ENCODE measurements at regions of chr14 and their contacts with region 1.

Region 1: DNA sequence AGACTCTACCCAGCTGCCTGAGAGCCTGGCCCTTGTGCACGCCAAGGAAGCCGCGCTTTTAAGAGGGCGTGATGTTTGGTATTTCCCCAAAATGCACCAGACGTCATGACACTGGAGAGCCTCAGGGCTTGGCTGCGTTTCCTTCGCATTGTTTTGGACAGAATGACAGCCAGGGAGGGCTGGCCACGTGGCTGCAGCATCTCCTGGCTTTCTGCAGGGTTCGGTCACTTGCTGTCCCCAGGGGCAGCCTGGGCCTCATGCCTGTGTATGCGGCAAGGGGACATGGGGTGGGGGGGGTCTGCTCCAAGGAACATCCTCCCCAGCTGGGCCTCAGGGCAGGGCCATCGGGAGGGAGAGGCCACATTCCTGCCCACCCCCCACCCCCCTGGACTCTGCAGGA is 16.2 kb upstream of the NUDT14 start:
- DNase-seq: no peak
- H3K4me3 ChIP-seq: peak overlapping the region in 1 of 4 experiments; percentile 58; a peak in 2 of 8 replicates
- H3K27ac ChIP-seq: no peak overlapping the region
- H3K4me1 ChIP-seq: peaks cover 0 to 17% (median 13%) of the 10 kb centered on the region in 4 experiments; a peak in 5 of 7 replicates
- H3K27me3 ChIP-seq: peaks cover 0 to 37% (median 19%) of the 10 kb centered on the region in 4 experiments; a peak in 5 of 7 replicates
- CTCF ChIP-seq: no peak
- EP300 ChIP-seq: no peak
- POLR2A ChIP-seq: no peak
- RAD21 ChIP-seq: no peak

Region 2: GRCh38 chr14:105065280-105066228 is 131.7 kb before region 1 on chr14 and contains the start of gene GPR132:
- CTCF ChIA-PET with region 1: no interaction called
- POLR2A ChIA-PET with region 1: no interaction called
- DNase-seq: no peak
- H3K4me3 ChIP-seq: no peak within 1 kb of the TSS
- H3K27ac ChIP-seq: no peak within 1 kb of the TSS
- H3K4me1 ChIP-seq: no peaks in the 10 kb centered on the region; a peak in 2 of 7 replicates
- H3K27me3 ChIP-seq: no peaks in the 10 kb centered on the region; a peak in 1 of 7 replicates
- CTCF ChIP-seq: no peak
- EP300 ChIP-seq: no peak
- POLR2A ChIP-seq: no peak
- RAD21 ChIP-seq: no peak
- total RNA-seq, gene GPR132: not detected in 2 replicates

Region 3: GRCh38 chr14:105126981-105127329 is 70.3 kb before region 1 on chr14:
- CTCF ChIA-PET with region 1: no interaction called
- POLR2A ChIA-PET with region 1: no interaction called
- DNase-seq: no peak
- H3K4me3 ChIP-seq: no peak overlapping the region
- H3K27ac ChIP-seq: no peak overlapping the region
- H3K4me1 ChIP-seq: no peaks in the 10 kb centered on the region
- H3K27me3 ChIP-seq: peaks cover 0 to under 1% (median 0%) of the 10 kb centered on the region in 4 experiments; a peak in 2 of 7 replicates
- CTCF ChIP-seq: no peak
- EP300 ChIP-seq: no peak
- POLR2A ChIP-seq: no peak
- RAD21 ChIP-seq: no peak

Region 4: GRCh38 chr14:105173901-105174894 is 23.1 kb before region 1 on chr14:
- CTCF ChIA-PET with region 1: interaction called, 36 read pairs
- POLR2A ChIA-PET with region 1: interaction called, 3 read pairs
- DNase-seq: no peak
- H3K4me3 ChIP-seq: no peak overlapping the region
- H3K27ac ChIP-seq: no peak overlapping the region
- H3K4me1 ChIP-seq: peaks cover 0 to 3% (median 2%) of the 10 kb centered on the region in 4 experiments; a peak in 4 of 7 replicates
- H3K27me3 ChIP-seq: peaks cover 0 to 8% (median 4%) of the 10 kb centered on the region in 4 experiments; a peak in 3 of 7 replicates
- CTCF ChIP-seq: no peak
- EP300 ChIP-seq: no peak
- POLR2A ChIP-seq: no peak
- RAD21 ChIP-seq: no peak

Region 5: GRCh38 chr14:105180592-105181548 is 16.4 kb before region 1 on chr14 and contains the start of gene NUDT14:
- CTCF ChIA-PET with region 1: interaction called, 12 read pairs
- POLR2A ChIA-PET with region 1: interaction called, 3 read pairs
- DNase-seq: peak in 1 of 2 experiments; percentile 92
- H3K4me3 ChIP-seq: peak within 1 kb of the TSS; percentile 33 to 72 (median 53); a peak in 7 of 8 replicates
- H3K27ac ChIP-seq: no peak within 1 kb of the TSS
- H3K4me1 ChIP-seq: peaks cover 0 to 10% (median 1%) of the 10 kb centered on the region in 4 experiments; a peak in 1 of 7 replicates
- H3K27me3 ChIP-seq: peaks cover 0 to 10% (median 8%) of the 10 kb centered on the region in 4 experiments; a peak in 4 of 7 replicates
- CTCF ChIP-seq: no peak
- EP300 ChIP-seq: no peak
- POLR2A ChIP-seq: no peak
- RAD21 ChIP-seq: no peak
- total RNA-seq, gene NUDT14: 33.3 and 33.6 TPM in 2 replicates

Measured in H1 (cell line).